ENCODE measurements at regions of chr17 and their contacts with region 1.

Region 1: DNA sequence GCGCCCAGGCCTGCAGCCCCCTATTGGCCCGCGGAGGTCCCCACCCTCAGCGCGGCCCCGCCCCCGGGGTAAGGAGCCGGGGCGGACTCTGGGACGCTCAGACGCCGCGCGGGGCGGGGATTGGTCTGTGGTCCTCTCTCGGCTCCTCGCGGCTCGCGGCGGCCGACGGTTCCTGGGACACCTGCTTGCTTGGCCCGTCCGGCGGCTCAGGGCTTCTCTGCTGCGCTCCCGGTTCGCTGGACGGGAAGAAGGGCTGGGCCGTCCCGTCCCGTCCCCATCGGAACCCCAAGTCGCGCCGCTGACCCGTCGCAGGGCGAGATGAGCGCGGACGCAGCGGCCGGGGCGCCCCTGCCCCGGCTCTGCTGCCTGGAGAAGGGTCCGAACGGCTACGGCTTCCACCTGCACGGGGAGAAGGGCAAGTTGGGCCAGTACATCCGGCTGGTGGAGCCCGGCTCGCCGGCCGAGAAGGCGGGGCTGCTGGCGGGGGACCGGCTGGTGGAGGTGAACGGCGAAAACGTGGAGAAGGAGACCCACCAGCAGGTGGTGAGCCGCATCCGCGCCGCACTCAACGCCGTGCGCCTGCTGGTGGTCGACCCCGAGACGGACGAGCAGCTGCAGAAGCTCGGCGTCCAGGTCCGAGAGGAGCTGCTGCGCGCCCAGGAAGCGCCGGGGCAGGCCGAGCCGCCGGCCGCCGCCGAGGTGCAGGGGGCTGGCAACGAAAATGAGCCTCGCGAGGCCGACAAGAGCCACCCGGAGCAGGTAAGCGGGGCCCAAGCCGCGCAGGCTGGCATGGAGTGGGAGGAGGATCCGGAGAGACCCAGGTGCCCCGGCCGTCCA is at the start of gene NHERF1:
- DNase-seq: peak; percentile 96
- H3K4me3 ChIP-seq: peak within 1 kb of the TSS; percentile 80 to 94 (median 88)
- H3K27ac ChIP-seq: peak within 1 kb of the TSS; percentile 90 to 93 (median 91)
- H3K4me1 ChIP-seq: peaks cover 13 to 77% (median 43%) of the 10 kb centered on the region in 4 donors
- H3K27me3 ChIP-seq: no peaks in the 10 kb centered on the region
- CTCF ChIP-seq: peak in 1 of 5 experiments; percentile 37
- EP300 ChIP-seq: no peak
- POLR2A ChIP-seq: peak; percentile 97
- total RNA-seq, gene NHERF1: 118 to 463 (median 233) TPM

Region 2: GRCh38 chr17:74873038-74873873 is 124.5 kb after region 1 on chr17:
- in situ Hi-C with region 1: loop called in 2 of 4 experiments (anchors 25 kb)
- intact Hi-C with region 1: no loop called
- DNase-seq: peak; percentile 100
- H3K4me3 ChIP-seq: peak overlapping the region; percentile 49 to 73 (median 62)
- H3K27ac ChIP-seq: peak overlapping the region; percentile 88 to 94 (median 92)
- H3K4me1 ChIP-seq: peaks cover 2 to 24% (median 19%) of the 10 kb centered on the region in 4 donors
- H3K27me3 ChIP-seq: no peaks in the 10 kb centered on the region
- CTCF ChIP-seq: no peak
- EP300 ChIP-seq: no peak
- POLR2A ChIP-seq: peak; percentile 97

Measured in transverse colon (tissue), 4 donors.